PC-3 (cell line): ENCODE measurements at regions of chr7 and their contacts with region 1.

Region 1: DNA sequence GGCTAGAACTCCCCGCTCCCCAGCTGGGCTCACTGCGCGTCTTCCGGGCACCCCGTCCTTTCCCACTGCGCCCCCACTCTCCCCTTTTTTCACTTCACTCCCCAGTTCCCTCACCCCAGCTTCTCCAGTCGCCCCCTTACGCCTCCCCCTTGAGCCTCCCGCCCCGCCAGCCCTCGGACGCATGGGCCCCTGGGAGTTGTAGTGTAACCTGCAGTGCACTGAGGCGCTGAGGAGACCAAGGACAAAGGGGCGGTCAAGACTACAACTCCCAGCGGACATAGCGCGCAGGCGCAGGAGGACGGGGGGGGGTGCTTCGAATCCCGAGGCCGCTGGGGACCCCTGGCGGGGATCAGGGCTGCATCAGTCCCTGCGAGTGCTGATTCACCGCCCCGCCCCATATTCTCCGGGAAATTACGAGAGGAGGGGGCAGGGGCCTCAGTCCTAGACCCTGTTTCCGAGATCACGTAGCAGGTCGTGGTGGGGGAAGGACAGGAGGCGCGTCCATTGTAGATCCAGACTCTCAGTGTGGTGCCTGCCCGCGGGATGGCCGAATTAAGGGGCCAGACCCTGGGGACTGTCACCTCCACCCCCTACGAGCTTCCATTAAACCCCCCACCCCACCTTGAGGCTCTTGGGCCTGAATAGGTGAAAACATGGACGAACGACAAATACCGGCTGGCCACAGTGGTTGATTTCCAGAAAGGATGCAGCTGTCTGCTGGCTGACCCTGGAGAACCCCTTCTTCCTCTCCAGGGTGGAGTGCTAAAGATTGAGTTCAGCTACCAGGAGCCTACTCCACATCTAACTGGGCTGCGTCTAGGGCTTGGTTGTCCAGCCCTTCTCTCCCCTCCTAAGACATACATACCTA is 554 bp upstream of the YWHAG start:
- DNase-seq: peak; percentile 95
- ATAC-seq: peak; percentile 93
- H3K4me3 ChIP-seq: peak overlapping the region; percentile 95
- H3K27ac ChIP-seq: peak overlapping the region; percentile 75
- H3K4me1 ChIP-seq: peaks cover 30% of the 10 kb centered on the region
- H3K27me3 ChIP-seq: no peaks in the 10 kb centered on the region
- CTCF ChIP-seq: peak; percentile 73

Region 2: GRCh38 chr7:76291343-76292212 is 67.8 kb before region 1 on chr7:
- CTCF ChIA-PET with region 1: no interaction called
- POLR2A ChIA-PET with region 1: no interaction called
- intact Hi-C with region 1: loop called (anchors 1 kb)
- DNase-seq: peak; percentile 99
- ATAC-seq: peak; percentile 78
- H3K4me3 ChIP-seq: peak overlapping the region; percentile 62; the same call in 1 of the 2 replicates
- H3K27ac ChIP-seq: peak overlapping the region; percentile 89
- H3K4me1 ChIP-seq: peaks cover 34% of the 10 kb centered on the region
- H3K27me3 ChIP-seq: no peaks in the 10 kb centered on the region
- CTCF ChIP-seq: peak; percentile 90

Region 3: DNA sequence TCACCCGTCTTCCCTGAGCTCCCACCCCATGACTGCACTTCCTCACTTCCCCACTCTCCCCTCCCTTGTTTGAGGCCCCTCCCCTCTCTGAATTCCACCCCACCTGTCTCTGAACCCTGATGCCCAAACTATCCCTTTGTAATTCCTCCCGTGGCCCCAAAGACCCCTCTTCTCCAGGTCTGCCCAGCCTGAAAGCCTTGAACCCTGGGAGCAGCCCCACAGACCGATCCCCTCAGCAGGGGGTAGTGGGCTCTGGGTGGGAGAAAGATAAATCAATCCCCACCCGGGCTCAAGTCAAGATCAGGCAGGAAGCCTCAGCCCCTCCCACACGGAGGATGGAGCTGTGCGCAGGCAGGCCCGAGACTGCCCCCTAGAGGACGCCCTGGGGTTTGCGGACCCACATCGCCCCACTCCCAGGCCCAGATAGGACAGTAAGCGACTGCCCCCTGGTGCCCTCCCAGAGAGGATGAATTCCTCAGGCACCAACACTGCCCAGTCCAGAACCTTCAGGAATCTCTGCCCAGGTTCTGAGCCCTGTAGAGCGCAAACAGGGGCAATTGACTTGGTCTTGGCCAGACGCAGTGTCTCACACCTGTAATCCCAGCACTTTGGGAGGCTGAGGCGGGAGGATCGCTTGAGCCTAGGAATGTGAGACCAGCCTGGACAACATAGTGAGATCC is 45.2 kb before region 1 on chr7:
- CTCF ChIA-PET with region 1: interaction called, 3 read pairs
- POLR2A ChIA-PET with region 1: interaction called, 3 read pairs
- intact Hi-C with region 1: loop called (anchors 1 kb)
- DNase-seq: peak; percentile 91
- ATAC-seq: peak; percentile 51
- H3K4me3 ChIP-seq: no peak overlapping the region
- H3K27ac ChIP-seq: no peak overlapping the region
- H3K4me1 ChIP-seq: peaks cover 12% of the 10 kb centered on the region
- H3K27me3 ChIP-seq: no peaks in the 10 kb centered on the region
- CTCF ChIP-seq: peak; percentile 99

Region 4: GRCh38 chr7:76340617-76341131 is 18.7 kb before region 1 on chr7:
- CTCF ChIA-PET with region 1: no interaction called
- POLR2A ChIA-PET with region 1: no interaction called
- intact Hi-C with region 1: loop called (anchors 2 kb)
- DNase-seq: no peak
- ATAC-seq: peak; percentile 21
- H3K4me3 ChIP-seq: no peak overlapping the region
- H3K27ac ChIP-seq: peak overlapping the region; percentile 14; the same call in 1 of the 2 replicates
- H3K4me1 ChIP-seq: peaks cover 20% of the 10 kb centered on the region
- H3K27me3 ChIP-seq: no peaks in the 10 kb centered on the region
- CTCF ChIP-seq: no peak

Region 5: DNA sequence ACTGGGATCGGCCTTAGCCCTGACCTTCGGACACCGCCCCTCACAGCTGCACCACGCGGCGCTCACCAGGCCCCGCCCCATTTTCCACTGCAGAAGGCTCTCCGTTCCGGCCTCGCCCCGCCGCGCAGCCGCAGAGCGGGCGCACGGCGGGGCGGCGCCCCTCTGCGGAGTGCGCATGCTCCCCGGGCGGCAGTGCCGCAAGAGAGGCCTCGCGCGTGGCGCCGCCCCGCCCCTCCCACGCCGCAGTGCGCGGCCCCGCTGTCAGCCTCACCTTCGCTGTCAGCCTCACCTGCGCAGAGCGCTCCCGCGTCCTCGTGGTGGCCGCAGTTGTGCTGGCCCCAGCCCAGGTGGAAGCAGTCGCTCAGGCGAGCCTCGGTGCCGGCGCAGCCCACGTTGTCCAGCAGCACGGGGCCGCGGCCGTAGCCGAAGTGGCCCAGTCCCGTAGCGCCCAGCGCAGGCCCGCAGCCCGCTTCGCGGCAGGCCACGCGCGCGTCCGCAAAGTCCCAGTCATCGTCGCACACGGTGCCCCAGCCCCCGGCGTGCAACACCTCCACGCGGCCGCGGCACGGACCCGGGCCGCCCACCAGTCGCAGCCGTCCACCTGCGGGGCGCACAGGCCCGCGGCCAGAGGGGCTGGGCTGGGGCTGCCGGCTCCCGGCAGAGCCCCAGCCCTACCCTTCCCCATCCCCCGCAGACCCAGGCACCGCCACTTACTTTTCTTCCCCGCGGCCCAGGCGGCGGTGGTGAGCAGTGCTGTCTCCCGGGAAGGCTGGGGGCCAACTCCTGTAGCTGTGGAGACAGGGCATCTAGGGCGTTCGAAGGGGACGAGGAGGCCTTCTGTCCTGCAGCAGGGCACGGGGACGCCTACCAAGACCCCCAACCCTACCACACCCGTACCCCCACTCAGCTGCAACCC is 34.0 kb after region 1 on chr7:
- CTCF ChIA-PET with region 1: interaction called, 4 read pairs
- POLR2A ChIA-PET with region 1: no interaction called
- intact Hi-C with region 1: loop called (anchors 2 kb)
- DNase-seq: peak; percentile 93
- ATAC-seq: peak; percentile 81
- H3K4me3 ChIP-seq: peak overlapping the region; percentile 74
- H3K27ac ChIP-seq: peak overlapping the region; percentile 34
- H3K4me1 ChIP-seq: peaks cover 28% of the 10 kb centered on the region
- H3K27me3 ChIP-seq: no peaks in the 10 kb centered on the region
- CTCF ChIP-seq: no peak

Region 6: GRCh38 chr7:77439572-77439971 is 1080.2 kb after region 1 on chr7:
- CTCF ChIA-PET with region 1: no interaction called
- POLR2A ChIA-PET with region 1: interaction called, 20 read pairs
- intact Hi-C with region 1: no loop called
- DNase-seq: peak; percentile 65
- ATAC-seq: peak; percentile 70
- H3K4me3 ChIP-seq: no peak overlapping the region
- H3K27ac ChIP-seq: no peak overlapping the region
- H3K4me1 ChIP-seq: peaks cover 42% of the 10 kb centered on the region
- H3K27me3 ChIP-seq: no peaks in the 10 kb centered on the region
- CTCF ChIP-seq: peak; percentile 70